ENCODE measurements at regions of chr2 and their contacts with region 1.

Region 1: DNA sequence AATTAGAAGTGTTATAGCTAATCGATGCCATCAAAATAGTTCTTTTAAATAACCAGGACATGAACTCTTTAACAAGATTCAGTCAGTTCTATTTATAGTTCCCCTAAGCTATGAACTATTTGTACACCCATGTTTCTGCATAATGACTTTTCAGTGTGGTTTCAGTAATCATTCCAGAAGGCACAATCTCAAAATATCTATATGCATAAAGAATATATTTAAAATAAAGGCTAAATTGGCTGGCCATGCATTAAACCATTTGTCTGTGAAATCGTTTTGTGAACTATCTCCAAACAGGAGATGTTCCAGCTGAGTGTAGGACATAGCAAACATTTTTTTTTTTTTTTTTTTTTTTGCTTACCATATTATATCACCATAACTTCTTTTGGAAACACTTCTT is 719.3 kb downstream of the PLCL1 start:
- DNase-seq: no peak
- H3K4me3 ChIP-seq: no peak overlapping the region
- H3K27ac ChIP-seq: no peak overlapping the region
- H3K4me1 ChIP-seq: no peaks in the 10 kb centered on the region
- H3K27me3 ChIP-seq: no peaks in the 10 kb centered on the region
- CTCF ChIP-seq: no peak
- POLR2A ChIP-seq: no peak

Region 2: GRCh38 chr2:198483051-198483450 is 40.7 kb before region 1 on chr2:
- intact Hi-C with region 1: loop called (anchors 5 kb)
- DNase-seq: no peak
- H3K4me3 ChIP-seq: no peak overlapping the region
- H3K27ac ChIP-seq: no peak overlapping the region
- H3K4me1 ChIP-seq: no peaks in the 10 kb centered on the region
- H3K27me3 ChIP-seq: no peaks in the 10 kb centered on the region
- CTCF ChIP-seq: no peak
- POLR2A ChIP-seq: no peak

Region 3: GRCh38 chr2:198715302-198715835 is 191.7 kb after region 1 on chr2:
- intact Hi-C with region 1: no loop called
- DNase-seq: no peak
- H3K4me3 ChIP-seq: no peak overlapping the region
- H3K27ac ChIP-seq: no peak overlapping the region
- H3K4me1 ChIP-seq: no peaks in the 10 kb centered on the region
- H3K27me3 ChIP-seq: no peaks in the 10 kb centered on the region
- CTCF ChIP-seq: no peak
- POLR2A ChIP-seq: no peak

Measured in esophagus squamous epithelium (tissue), 5 donors.